PC-9 (cell line): ENCODE measurements at regions of chr20 and their contacts with region 1.

Region 1: GRCh38 chr20:53559816-53560215 is 33.8 kb downstream of the ZNF217 start:
- DNase-seq: no peak
- H3K4me3 ChIP-seq: no peak overlapping the region
- H3K27ac ChIP-seq: no peak overlapping the region
- H3K4me1 ChIP-seq: no peaks in the 10 kb centered on the region
- H3K27me3 ChIP-seq: no peaks in the 10 kb centered on the region
- CTCF ChIP-seq: no peak

Region 2: GRCh38 chr20:53493311-53493864 is 66.4 kb before region 1 on chr20:
- CTCF ChIA-PET with region 1: no interaction called
- POLR2A ChIA-PET with region 1: no interaction called
- intact Hi-C with region 1: no loop called
- DNase-seq: no peak
- H3K4me3 ChIP-seq: no peak overlapping the region
- H3K27ac ChIP-seq: no peak overlapping the region
- H3K4me1 ChIP-seq: no peaks in the 10 kb centered on the region
- H3K27me3 ChIP-seq: peaks cover 86% of the 10 kb centered on the region
- CTCF ChIP-seq: no peak

Region 3: DNA sequence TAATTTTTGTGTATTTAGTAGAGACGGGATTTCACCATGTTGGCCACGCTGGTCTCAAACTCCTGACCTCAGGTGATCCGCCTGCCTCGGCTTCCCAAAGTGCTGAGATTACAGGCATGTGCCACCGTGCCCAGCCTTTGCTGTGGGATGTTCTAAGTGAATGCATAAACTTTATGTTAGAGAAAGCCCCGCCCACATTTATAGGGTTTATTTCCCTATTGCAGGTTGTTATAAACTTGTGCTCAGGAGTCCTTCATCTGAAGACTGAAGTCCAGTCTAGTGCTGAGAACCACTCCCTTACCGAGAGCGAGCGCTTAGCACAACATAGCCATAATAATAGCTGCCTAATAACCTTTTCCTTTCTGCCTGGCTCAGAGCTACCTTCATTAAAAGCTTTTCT is 109.2 kb after region 1 on chr20:
- CTCF ChIA-PET with region 1: no interaction called
- POLR2A ChIA-PET with region 1: no interaction called
- intact Hi-C with region 1: no loop called
- DNase-seq: no peak
- H3K4me3 ChIP-seq: no peak overlapping the region
- H3K27ac ChIP-seq: no peak overlapping the region
- H3K4me1 ChIP-seq: peaks cover 10% of the 10 kb centered on the region
- H3K27me3 ChIP-seq: no peaks in the 10 kb centered on the region
- CTCF ChIP-seq: no peak

Region 4: GRCh38 chr20:54028276-54029011 is 468.6 kb after region 1 on chr20:
- CTCF ChIA-PET with region 1: interaction called, 10 read pairs
- POLR2A ChIA-PET with region 1: no interaction called
- intact Hi-C with region 1: no loop called
- DNase-seq: no peak
- H3K4me3 ChIP-seq: no peak overlapping the region
- H3K27ac ChIP-seq: no peak overlapping the region
- H3K4me1 ChIP-seq: no peaks in the 10 kb centered on the region
- H3K27me3 ChIP-seq: no peaks in the 10 kb centered on the region
- CTCF ChIP-seq: no peak